HEK293T (cell line): ENCODE measurements at regions of chr10 and their contacts with region 1.

Region 1: GRCh38 chr10:97400665-97401454 is at the start of gene RRP12:
- DNase-seq: peak; percentile 98

Region 2: DNA sequence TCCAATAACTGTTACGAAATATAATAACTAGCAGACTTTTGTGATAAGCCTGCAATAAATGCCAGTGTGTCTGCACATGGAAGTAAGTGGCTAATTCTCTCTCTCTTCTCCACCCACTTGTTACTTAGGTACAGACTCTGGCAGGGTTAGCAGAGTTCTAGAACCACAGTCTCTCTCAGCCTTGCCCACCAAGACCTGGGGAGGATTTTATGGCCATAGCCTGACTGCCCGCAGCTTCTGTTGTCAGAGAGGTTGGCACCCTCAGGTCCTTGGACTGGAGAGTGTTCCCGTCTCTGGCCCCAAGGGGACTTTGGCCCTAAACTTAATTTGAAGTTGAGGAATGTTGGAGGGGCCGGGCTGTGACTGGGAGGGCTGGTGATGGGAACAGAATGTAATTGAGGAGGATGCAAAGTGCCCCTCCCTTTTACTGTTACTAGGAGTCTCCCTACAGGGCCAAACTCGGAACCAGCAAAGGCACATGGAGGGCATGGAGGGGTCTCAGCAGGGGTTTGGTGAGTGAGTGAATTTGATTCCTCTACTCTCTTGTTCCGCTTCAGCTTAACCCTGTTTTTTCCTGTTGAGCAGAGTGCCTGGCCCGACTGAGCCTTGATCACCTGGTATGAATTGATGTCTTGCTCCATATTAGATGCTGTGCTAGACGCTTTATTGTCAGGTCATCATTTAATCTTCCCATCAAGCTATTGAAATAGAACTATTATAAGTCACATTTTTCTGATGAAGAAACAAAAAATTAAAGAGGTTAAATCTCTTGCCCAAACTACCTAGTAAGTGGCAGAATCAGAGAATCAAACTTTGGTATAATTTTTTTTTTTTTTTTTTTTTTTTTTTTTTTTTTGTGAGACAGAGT is 605.8 kb before region 1 on chr10:
- CTCF ChIA-PET with region 1: no interaction called
- POLR2A ChIA-PET with region 1: no interaction called
- DNase-seq: no peak

Region 3: DNA sequence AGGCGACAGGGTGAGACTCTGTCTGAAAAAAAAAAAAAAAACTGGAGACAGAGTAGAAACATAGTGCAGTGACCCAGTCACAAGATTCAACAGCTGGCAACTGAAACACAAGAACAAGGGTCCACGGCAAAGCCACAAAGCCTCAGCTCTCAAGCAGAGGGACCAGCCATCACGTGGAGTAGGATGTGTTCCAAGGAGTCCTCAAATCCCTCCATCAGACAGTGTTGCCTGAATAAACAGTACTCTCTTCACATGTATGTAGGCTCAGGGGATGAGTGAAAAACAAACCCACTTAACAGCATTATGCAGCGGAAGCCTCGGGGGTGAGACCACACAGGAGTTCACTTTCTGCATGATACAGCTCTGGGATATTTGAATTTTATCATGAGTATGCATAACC is 277.1 kb before region 1 on chr10:
- CTCF ChIA-PET with region 1: no interaction called
- POLR2A ChIA-PET with region 1: no interaction called
- DNase-seq: no peak

Region 4: DNA sequence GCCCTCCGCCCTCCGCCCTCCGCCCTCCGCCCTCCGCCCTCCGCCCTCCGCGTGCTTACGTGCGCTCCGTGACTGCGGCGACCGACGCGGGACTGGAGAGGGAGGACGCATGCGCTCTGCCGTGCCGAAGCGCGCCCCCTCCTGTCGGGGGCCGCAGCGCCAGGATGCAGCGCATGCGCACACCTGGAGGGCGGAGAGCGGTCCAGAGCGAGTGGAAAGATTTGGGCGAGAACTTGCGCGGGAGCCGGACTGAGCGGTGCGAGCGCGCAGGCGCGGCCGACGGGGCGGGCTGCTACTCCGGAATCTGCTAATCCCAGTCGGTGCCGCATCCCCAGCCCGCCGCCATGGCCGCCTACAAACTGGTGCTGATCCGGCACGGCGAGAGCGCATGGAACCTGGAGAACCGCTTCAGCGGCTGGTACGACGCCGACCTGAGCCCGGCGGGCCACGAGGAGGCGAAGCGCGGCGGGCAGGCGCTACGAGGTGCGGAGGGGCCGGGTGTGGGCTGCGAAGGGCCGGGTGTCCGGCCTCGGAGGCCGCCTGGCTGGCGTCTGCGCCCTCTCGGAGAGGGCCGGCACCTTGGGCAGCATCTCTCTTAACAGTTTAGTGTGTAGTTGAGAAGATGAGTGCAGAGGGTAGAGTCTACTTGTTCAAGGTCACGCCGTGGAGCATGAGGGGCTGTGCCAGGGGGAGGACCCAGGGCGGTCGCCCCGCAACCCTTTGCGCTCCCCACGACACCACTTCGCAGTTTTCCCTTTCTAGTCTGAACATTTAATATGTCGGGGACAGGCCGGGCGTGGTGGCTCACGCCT is 25.3 kb after region 1 on chr10 and contains the start of gene PGAM1:
- CTCF ChIA-PET with region 1: no interaction called
- POLR2A ChIA-PET with region 1: interaction called, 17 read pairs
- DNase-seq: peak; percentile 100

Region 5: GRCh38 chr10:97759158-97759887 is 358.5 kb after region 1 on chr10:
- CTCF ChIA-PET with region 1: no interaction called
- POLR2A ChIA-PET with region 1: no interaction called
- DNase-seq: peak; percentile 87